Heart left ventricle (tissue), 16 donors: ENCODE measurements at regions of chr7 and their contacts with region 1.

Region 1: DNA sequence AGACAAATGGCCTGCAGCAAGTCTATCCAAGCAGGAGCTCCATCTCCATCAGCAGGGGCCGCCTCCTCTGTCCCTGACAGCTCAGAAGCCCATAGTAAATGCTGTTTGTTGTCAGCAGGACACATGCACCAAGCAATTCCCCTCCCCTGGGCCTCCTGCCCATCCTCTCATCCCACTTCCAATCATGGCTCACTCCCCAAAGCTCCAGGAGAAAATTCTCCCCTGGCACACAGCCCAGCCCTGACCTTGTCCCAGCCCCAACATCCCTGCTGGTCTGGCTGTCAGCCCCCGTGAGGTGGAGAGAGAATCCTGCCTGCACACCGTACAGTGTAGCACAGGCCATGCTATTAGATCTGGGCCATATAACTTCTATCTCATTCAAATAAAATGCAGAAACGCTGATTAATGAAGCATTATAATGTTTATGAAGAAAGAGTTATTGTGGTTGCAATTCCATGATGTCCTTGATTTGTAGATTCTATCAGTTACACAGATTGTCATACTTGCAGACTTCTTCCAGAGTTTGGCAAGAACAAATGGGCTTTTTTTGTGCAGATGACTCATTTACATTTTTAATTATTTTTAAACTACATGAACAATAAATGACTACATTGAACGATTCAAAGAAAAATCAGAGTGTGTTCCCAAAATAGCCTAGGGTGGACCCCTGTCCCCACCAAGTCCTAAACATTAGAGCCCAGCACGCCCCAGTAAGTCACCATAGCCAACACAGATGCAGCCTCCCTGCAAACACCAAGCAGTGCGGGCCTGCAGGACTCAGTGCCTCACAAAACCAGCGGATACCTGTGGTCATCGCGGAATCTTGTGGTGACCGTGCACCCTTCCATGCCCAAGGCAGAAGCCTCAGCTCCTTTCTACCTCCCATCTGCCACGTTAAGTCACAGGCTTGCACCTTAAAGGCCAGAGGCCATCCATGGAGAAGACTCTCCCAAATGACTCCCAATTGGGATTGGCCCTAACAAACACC is 70.1 kb downstream of the COBL start:
- DNase-seq: peak; percentile 82 to 92 (median 87)
- ATAC-seq: peak; percentile 93 to 96 (median 94)
- H3K4me3 ChIP-seq: no peak overlapping the region
- H3K27ac ChIP-seq: peak overlapping the region in 1 of 12 donors; percentile 27
- H3K4me1 ChIP-seq: peaks cover 0 to 32% (median 4%) of the 10 kb centered on the region in 12 donors
- H3K27me3 ChIP-seq: no peaks in the 10 kb centered on the region
- CTCF ChIP-seq: peak in 3 of 12 donors; percentile 8 to 28 (median 21)
- POLR2A ChIP-seq: no peak

Region 2: DNA sequence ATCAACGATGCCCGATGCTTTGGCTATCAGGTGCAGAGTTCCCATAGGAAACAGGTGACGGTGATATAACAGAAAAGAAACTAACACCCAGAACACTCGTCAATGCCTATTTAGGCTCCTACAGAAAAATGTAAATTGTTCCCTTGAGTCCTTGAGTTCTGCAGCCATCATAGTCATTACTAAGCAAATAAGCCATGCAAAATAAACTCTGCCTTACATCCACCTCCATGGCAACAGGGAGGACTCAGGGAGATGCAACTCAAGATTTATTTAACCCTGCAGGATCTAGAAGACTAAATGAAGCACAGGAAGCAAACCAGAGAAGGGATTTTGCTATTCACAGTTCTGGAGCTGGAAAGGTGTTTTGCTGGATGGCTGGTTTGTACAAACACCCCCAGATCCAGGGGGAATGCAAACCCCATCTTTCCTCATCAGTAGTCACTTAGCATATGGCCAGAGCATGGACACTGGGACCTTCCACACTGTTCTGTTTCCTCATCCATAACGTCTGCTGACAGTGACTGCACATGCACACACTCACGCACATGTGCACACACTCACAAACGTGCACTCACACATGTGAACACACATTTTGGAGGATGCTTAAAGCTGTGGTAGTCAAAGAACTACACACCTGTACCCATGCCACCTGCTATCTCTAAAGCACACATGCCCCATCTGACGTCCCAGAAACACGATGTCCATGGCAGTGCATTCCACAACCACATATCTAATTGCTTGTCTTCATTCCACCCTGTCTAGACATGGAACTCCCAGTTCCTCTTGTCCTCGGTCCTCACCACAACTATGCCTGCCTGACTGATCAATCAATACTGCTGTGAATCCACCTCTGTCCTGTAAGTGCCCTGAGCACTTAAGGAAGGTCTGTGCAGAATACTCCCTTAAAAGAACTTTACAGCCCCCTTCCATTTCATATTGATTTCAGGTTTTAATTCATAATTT is 108.1 kb before region 1 on chr7:
- intact Hi-C with region 1: no loop called
- DNase-seq: no peak
- ATAC-seq: no peak
- H3K4me3 ChIP-seq: no peak overlapping the region
- H3K27ac ChIP-seq: peak overlapping the region in 1 of 12 donors; percentile 62
- H3K4me1 ChIP-seq: peaks cover 2 to 48% (median 30%) of the 10 kb centered on the region in 12 donors
- H3K27me3 ChIP-seq: no peaks in the 10 kb centered on the region
- CTCF ChIP-seq: no peak
- POLR2A ChIP-seq: no peak

Region 3: DNA sequence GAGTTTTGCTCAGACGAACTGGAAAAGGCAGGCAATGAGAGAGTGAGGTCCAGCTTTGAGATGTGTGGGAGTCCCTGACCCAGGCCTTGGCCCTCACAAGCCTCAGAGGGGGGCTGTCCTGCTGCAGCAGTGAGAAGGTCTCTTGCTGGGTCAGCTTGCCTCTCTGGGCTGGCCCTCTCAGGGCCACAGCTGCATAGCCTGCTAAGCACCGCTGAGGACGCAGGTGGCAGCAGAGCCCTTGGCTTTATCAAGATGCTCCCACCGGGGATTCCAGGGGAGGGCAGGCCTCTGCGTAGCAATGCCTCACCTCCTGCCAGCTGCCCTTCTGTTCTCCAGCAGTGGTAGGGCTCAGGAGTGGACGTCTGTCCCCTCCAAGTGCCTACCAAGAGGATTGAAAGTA is 58.6 kb before region 1 on chr7:
- intact Hi-C with region 1: loop called in 2 of 10 experiments (anchors 5 kb)
- DNase-seq: peak; percentile 29 to 76 (median 67)
- ATAC-seq: peak; percentile 55 to 81 (median 74)
- H3K4me3 ChIP-seq: no peak overlapping the region
- H3K27ac ChIP-seq: peak overlapping the region in 9 of 12 donors; percentile 16 to 77 (median 46)
- H3K4me1 ChIP-seq: peaks cover 0 to 40% (median 14%) of the 10 kb centered on the region in 12 donors
- H3K27me3 ChIP-seq: no peaks in the 10 kb centered on the region
- CTCF ChIP-seq: peak in 10 of 12 donors; percentile 10 to 48 (median 26)
- POLR2A ChIP-seq: no peak

Region 4: GRCh38 chr7:51308265-51308664 is 61.7 kb after region 1 on chr7:
- intact Hi-C with region 1: loop called in 1 of 10 experiments (anchors 5 kb)
- DNase-seq: no peak
- ATAC-seq: peak in 3 of 4 donors; percentile 16 to 58 (median 55)
- H3K4me3 ChIP-seq: no peak overlapping the region
- H3K27ac ChIP-seq: peak overlapping the region in 6 of 12 donors; percentile 3 to 47 (median 34)
- H3K4me1 ChIP-seq: peaks cover 0 to 41% (median 11%) of the 10 kb centered on the region in 12 donors
- H3K27me3 ChIP-seq: no peaks in the 10 kb centered on the region
- CTCF ChIP-seq: no peak
- POLR2A ChIP-seq: no peak

Region 5: DNA sequence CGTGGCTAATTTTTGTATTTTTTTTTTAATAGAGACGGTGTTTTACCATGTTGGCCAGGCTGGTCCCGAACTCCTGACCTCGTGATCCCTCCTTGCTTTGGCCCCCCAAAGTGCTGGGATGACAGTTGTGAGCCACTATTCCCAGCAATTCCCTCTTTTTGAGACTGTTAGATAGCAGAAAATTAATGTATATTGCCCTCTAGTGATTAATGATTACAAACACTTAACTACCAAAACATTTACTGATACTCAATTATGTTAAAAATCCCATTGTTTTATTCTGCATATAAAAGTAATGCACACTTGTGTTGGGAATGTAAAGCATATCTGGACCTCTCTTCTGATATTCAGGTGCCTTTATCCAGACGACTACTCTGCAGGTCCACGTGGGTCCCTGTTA is 111.3 kb after region 1 on chr7:
- intact Hi-C with region 1: loop called in 6 of 10 experiments (anchors 5 to 10 kb)
- DNase-seq: no peak
- ATAC-seq: no peak
- H3K4me3 ChIP-seq: no peak overlapping the region
- H3K27ac ChIP-seq: peak overlapping the region in 6 of 12 donors; percentile 42 to 70 (median 62)
- H3K4me1 ChIP-seq: peaks cover 0 to 10% (median 0%) of the 10 kb centered on the region in 12 donors
- H3K27me3 ChIP-seq: no peaks in the 10 kb centered on the region
- CTCF ChIP-seq: peak in 5 of 12 donors; percentile 10 to 33 (median 14)
- POLR2A ChIP-seq: no peak

Region 6: GRCh38 chr7:51517187-51517586 is 270.6 kb after region 1 on chr7:
- intact Hi-C with region 1: no loop called
- DNase-seq: no peak
- ATAC-seq: no peak
- H3K4me3 ChIP-seq: no peak overlapping the region
- H3K27ac ChIP-seq: no peak overlapping the region
- H3K4me1 ChIP-seq: no peaks in the 10 kb centered on the region
- H3K27me3 ChIP-seq: no peaks in the 10 kb centered on the region
- CTCF ChIP-seq: no peak
- POLR2A ChIP-seq: no peak